OCI-LY7 (cell line): ENCODE measurements at regions of chr22 and their contacts with region 1.

Region 1: DNA sequence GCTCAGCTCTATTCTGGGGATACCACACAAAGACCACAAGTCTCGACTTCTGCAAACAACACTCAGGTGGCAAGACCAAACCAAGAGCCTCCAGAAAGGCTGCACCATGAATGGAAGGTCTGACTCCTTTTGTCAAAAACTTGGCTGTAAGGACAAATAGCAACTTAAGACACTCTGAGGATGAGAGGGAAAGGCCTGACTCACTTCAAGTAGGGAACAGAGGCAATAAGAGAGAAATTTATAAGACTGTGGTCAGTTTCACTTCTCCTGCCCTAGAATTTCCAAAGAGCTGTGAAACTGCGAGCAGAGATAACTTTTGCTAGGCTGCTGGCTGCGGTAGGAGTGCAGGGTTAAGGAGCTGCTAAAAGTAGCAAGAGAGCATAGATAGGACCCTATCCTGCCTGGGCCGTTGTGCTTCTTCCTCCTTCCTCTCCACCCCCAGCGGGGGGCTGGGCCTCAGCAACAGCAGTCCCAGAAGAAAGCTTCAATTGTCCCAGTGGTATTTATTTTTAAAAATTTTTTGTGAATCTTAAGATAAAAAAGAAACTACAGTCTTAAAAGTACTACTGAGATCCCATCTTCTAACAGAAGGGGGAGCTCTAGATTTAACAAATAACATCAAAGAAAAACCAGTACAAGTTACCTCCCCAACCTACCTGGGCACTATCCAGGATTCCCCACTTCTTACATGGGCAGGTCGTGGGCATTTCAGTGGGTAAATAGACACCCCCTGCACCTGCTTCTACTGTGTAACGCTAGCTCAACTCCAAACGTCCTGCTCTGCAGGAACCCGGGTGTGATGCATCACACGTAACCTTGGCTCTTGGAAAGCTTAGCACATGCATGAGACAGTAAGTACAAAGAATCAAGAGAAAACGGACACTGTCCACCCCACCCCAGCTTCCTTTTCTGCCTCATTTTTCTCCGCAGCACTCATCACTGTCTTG is 66.4 kb downstream of the SGSM3 start:
- DNase-seq: peak; percentile 82
- H3K4me3 ChIP-seq: peak overlapping the region; percentile 64
- H3K27ac ChIP-seq: peak overlapping the region; percentile 99
- H3K4me1 ChIP-seq: peaks cover 96% of the 10 kb centered on the region
- CTCF ChIP-seq: peak; percentile 89

Region 2: GRCh38 chr22:40024201-40025061 is 412.3 kb before region 1 on chr22:
- CTCF ChIA-PET with region 1: no interaction called
- POLR2A ChIA-PET with region 1: no interaction called
- intact Hi-C with region 1: no loop called
- DNase-seq: peak; percentile 82
- H3K4me3 ChIP-seq: no peak overlapping the region
- H3K27ac ChIP-seq: no peak overlapping the region
- H3K4me1 ChIP-seq: peaks cover 25% of the 10 kb centered on the region
- CTCF ChIP-seq: peak; percentile 97

Region 3: DNA sequence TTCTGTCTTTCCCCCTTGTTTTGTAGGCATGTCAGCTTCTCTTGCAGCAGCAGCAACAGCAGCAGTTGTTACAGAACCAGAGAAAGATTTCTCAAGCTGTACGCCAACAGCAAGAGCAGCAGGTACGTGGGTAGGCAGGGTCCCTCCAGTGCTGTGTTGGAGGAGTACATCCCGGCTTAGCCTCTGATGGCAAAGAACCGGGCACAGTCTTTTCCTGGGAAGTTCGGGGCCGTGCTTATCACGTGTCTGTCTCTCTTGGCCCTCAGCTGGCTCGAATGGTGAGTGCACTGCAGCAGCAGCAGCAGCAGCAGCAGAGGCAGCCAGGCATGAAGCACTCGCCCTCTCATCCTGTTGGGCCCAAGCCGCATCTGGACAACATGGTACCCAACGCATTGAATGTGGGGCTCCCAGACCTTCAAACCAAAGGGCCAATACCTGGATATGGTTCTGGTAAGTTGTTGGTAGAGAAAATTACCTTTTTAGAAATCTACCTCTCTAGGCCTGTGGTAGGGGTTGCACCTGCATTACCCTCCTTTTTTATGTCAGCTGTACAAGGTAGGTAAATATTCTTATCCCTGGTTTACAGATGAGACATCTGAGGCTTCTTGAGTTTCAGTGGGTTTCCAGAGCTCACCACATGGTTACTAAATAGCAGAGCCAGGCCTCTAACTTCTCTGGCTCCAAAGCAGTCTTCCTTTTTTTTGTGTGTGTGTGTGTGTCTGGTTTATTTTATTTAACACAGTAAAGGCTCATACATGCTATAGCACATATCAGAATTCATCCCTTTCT is 135.7 kb before region 1 on chr22:
- CTCF ChIA-PET with region 1: no interaction called
- POLR2A ChIA-PET with region 1: no interaction called
- intact Hi-C with region 1: no loop called
- DNase-seq: no peak
- H3K4me3 ChIP-seq: no peak overlapping the region
- H3K27ac ChIP-seq: no peak overlapping the region
- H3K4me1 ChIP-seq: no peaks in the 10 kb centered on the region
- CTCF ChIP-seq: no peak

Region 4: DNA sequence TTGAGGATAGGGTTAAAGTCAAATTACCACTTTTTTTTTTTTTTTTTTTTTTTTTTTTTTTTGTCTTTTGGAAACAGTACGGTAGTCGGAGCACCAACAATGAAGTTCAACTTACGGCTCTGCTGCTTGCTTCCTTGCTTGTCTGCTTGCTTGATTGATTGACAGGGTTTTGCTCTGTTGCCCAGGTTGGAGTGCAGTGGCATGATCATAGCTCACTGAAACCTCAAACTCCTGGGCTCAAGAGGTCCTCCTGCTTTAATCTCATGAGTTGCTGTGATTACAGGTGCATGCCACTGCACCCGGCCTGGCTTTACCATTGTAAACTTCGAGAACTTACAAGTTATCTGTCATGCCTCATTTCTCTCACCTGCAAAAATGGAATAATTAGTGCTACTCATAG is 60.6 kb before region 1 on chr22:
- CTCF ChIA-PET with region 1: no interaction called
- POLR2A ChIA-PET with region 1: interaction called, 6 read pairs
- intact Hi-C with region 1: loop called (anchors 1 kb)
- DNase-seq: peak; percentile 90
- H3K4me3 ChIP-seq: peak overlapping the region; percentile 58
- H3K27ac ChIP-seq: peak overlapping the region; percentile 97
- H3K4me1 ChIP-seq: peaks cover 71% of the 10 kb centered on the region
- CTCF ChIP-seq: no peak

Region 5: GRCh38 chr22:40412441-40412840 is 24.3 kb before region 1 on chr22:
- CTCF ChIA-PET with region 1: interaction called, 6 read pairs
- POLR2A ChIA-PET with region 1: interaction called, 17 read pairs
- intact Hi-C with region 1: loop called (anchors 1 kb)
- DNase-seq: peak; percentile 90
- H3K4me3 ChIP-seq: peak overlapping the region; percentile 14
- H3K27ac ChIP-seq: peak overlapping the region; percentile 98
- H3K4me1 ChIP-seq: peaks cover 74% of the 10 kb centered on the region
- CTCF ChIP-seq: no peak

Region 6: GRCh38 chr22:40463017-40463631 is 26.3 kb after region 1 on chr22:
- CTCF ChIA-PET with region 1: interaction called, 4 read pairs
- POLR2A ChIA-PET with region 1: interaction called, 10 read pairs
- intact Hi-C with region 1: loop called (anchors 1 kb)
- DNase-seq: peak; percentile 80
- H3K4me3 ChIP-seq: peak overlapping the region; percentile 82
- H3K27ac ChIP-seq: peak overlapping the region; percentile 90
- H3K4me1 ChIP-seq: peaks cover 39% of the 10 kb centered on the region
- CTCF ChIP-seq: no peak

Region 7: DNA sequence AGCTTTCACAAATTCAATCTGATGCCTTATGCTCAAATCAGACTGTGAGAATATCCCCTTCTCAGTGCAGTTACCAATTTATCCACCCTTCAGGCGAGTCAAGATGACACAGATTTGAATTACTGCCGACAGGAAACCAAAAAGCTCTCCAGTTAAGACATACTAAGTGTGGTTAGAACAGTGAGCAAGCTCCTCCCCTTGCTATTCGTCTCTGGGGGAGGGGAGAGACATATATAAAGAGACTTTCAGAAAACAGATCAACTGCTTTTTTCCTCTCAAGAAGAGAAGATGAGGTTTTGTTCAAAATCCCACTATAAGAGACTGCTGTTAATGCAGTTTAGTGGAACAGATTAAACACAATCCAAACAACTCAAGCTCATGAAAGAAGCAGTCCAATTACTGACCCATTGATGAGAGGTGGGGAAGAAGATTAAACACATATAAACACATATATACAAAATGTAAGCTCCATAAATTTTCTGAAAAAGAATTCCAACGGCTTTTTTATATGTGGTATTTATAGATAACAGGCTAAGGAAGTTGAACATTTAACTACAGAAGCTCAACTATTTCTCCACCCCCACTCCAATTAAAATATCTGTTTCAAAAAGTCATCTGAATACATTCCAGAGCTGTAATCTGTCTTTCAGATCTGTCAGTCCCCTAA is 97.1 kb after region 1 on chr22:
- CTCF ChIA-PET with region 1: no interaction called
- POLR2A ChIA-PET with region 1: interaction called, 4 read pairs
- intact Hi-C with region 1: loop called (anchors 2 kb)
- DNase-seq: peak; percentile 89
- H3K4me3 ChIP-seq: peak overlapping the region; percentile 68
- H3K27ac ChIP-seq: peak overlapping the region; percentile 68
- H3K4me1 ChIP-seq: peaks cover 58% of the 10 kb centered on the region
- CTCF ChIP-seq: no peak

Region 8: DNA sequence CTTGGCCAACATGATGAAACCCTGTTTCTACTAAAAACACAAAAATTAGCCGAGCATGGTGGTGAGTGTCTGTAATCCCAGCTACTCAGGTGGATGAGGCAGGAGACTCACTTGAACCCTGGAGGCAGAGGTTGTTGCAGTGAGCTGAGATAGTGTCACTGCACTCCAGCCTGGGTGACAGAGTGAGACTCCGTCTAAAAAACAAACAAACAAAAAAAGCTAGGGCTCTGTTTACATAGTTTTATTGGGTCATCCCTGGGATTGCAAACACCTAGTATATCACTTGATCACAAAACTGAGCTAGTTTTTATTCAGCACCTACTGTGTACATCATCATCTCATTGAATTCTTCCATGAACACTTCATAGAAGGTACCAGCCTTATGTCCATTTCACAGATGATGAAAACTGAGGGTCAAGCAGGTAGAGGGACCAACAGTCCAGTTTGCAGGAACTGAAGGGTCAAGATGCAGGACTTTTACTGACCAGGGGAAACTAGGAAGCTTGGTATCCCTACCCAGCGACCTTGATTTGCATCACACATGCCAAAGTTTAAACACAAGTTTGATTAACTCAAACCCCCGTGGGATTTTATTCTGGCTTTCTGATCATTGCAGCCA is 208.9 kb after region 1 on chr22:
- CTCF ChIA-PET with region 1: no interaction called
- POLR2A ChIA-PET with region 1: interaction called, 5 read pairs
- intact Hi-C with region 1: loop called (anchors 1 kb)
- DNase-seq: no peak
- H3K4me3 ChIP-seq: no peak overlapping the region
- H3K27ac ChIP-seq: no peak overlapping the region
- H3K4me1 ChIP-seq: peaks cover 33% of the 10 kb centered on the region
- CTCF ChIP-seq: no peak